CD8-positive, alpha-beta T cell (primary cell): ENCODE measurements at regions of chr1 and their contacts with region 1.

Region 1: DNA sequence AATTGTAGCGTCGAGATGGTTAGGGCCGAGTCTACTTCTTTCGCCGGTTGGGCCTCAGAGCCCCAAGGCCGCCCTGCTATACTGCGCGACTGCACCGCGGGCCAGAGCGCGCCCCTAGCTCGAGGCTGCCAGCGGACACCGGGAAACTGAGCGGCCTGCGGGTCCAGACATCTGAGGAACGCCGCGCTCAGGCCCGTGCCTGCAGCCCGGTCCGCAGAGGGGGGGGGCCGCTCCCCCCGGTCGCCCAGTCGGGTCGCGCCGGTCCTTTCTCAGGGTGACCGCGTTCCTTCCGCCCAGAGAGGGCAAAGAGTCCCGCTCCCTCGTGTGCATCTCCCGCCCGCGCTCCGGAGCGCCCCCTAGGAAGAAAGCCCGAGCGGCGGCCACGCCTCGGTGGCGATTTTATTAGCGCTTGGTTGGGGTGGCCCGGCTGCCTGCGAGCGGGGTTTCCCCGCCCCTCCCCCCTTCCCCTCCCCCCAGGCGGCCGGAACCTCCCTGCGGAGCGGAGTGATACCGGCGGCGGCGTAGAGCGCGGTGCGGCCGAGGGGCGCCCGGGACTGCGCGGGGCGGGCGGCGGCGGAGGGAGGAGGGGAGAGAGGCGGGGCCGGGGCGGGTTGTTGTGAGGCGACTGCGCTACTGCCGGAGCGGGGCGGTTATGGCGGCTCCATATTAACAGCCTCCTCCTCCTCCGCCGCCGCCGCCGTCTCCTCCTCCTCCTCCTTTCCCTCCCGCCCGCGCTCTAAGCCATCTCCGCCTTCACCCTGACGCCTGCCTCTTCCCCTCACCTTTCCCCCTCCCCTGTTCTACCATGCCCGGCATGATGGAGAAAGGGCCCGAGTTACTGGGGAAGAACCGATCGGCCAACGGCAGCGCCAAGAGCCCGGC is at the start of gene RCOR3:
- DNase-seq: peak; percentile 81 to 96 (median 91)
- ATAC-seq: peak; percentile 76
- H3K4me3 ChIP-seq: peak within 1 kb of the TSS; percentile 74 to 88
- H3K4me3 Mint-ChIP-seq: peak within 1 kb of the TSS; percentile 95
- H3K27ac ChIP-seq: peak within 1 kb of the TSS; percentile 80 to 84
- H3K27ac Mint-ChIP-seq: peak within 1 kb of the TSS; percentile 94
- H3K4me1 ChIP-seq: peaks cover 16% of the 10 kb centered on the region
- H3K4me1 Mint-ChIP-seq: peaks cover 18% of the 10 kb centered on the region
- H3K27me3 ChIP-seq: no peaks in the 10 kb centered on the region
- H3K27me3 Mint-ChIP-seq: no peaks in the 10 kb centered on the region
- CTCF ChIP-seq: peak; percentile 40
- total RNA-seq, gene RCOR3: 54.6 to 61.1 TPM

Region 2: DNA sequence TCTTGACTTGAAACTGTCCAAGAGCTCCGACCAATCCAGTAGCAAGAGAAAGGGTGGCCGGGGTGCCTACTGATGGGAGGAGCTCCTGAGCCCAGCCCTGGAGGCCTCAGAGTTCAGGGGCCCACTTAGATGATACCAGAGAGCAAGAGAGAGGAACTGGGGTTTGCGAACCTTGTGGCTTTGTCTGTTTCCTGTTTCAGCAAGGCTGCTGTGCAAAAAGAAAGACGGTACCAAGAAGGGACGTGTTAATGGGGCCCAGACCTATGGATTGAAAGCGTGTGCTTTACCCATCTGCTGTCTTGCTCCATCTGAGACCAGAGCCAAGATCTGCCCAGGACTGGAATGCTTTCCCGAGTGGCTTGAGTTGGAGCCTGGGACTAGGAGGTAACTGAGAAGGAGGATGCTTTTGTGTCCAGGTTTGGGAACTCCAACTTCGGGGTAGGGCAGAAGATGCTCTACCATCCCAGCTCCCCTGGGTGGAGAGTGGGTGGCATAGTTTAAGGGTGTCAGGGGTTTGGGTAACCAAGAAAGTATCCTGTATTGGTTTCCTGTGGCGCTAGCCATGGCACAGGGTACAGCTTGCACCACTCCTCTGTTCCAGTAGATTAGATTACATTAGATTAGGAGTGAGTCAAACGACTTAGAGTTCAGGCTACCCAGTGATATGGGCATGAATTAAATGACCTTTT is 1502.9 kb before region 1 on chr1 and contains the start of gene TRAF3IP3:
- CTCF ChIA-PET with region 1: no interaction called
- POLR2A ChIA-PET with region 1: no interaction called
- intact Hi-C with region 1: loop called in 1 of 2 experiments (anchors 10 kb)
- DNase-seq: peak; percentile 49 to 91 (median 79)
- ATAC-seq: peak; percentile 89
- H3K4me3 ChIP-seq: peak within 1 kb of the TSS; percentile 83 to 90
- H3K4me3 Mint-ChIP-seq: peak within 1 kb of the TSS; percentile 91
- H3K27ac ChIP-seq: peak within 1 kb of the TSS; percentile 79
- H3K27ac Mint-ChIP-seq: peak within 1 kb of the TSS; percentile 96
- H3K4me1 ChIP-seq: peaks cover 72% of the 10 kb centered on the region
- H3K4me1 Mint-ChIP-seq: peaks cover 81% of the 10 kb centered on the region
- H3K27me3 ChIP-seq: no peaks in the 10 kb centered on the region
- H3K27me3 Mint-ChIP-seq: no peaks in the 10 kb centered on the region
- CTCF ChIP-seq: no peak
- total RNA-seq, gene TRAF3IP3: 209 to 230 TPM

Region 3: DNA sequence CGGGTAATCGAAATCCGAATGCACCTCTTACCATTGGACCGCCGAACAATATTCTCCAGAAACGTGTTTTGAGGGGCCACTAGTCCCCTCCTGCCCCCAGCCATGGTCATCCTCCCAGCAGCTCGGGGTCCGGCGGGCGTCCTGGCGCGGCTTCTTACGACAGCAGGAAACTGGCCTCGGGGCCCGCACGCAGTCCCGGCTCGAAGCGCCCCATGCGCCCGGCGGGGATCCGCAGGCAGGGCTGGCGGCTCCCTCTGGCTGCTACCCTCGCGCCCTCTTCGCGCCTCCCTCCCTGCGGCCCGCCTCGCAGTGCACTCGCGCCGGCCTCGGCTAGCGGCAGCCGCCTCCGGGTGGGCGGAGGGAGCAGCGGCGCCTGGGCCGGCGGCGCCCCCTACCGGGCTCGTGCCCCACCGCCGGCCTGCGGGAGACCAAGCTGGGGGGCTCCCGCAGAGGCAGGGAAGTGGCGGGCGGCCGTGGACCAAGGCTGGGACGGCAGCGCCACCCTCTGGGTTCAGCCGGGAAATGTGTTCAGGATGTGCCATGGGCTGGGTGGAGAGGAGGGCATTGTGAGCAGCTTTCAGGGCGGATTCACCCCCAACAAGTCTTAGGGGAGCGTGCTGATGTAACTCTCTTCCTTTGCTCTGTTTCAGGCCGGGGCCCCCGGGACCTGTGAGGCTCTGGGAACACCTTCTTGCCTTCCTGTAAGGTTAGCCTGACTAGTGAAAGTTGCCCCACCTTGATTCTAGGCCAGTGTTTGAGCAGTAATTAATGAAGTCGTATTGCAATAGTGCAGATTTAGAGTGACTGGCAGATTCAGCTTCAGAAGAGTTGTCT is 124.9 kb before region 1 on chr1 and contains the start of gene KCNH1:
- CTCF ChIA-PET with region 1: interaction called, 8 read pairs
- POLR2A ChIA-PET with region 1: interaction called, 3 read pairs
- intact Hi-C with region 1: loop called (anchors 2 to 5 kb)
- DNase-seq: peak; percentile 67 to 89 (median 80)
- ATAC-seq: peak; percentile 95
- H3K4me3 ChIP-seq: peak within 1 kb of the TSS; percentile 38 to 40
- H3K4me3 Mint-ChIP-seq: peak within 1 kb of the TSS; percentile 77
- H3K27ac ChIP-seq: no peak within 1 kb of the TSS
- H3K27ac Mint-ChIP-seq: no peak within 1 kb of the TSS
- H3K4me1 ChIP-seq: peaks cover 13% of the 10 kb centered on the region
- H3K4me1 Mint-ChIP-seq: peaks cover 9% of the 10 kb centered on the region
- H3K27me3 ChIP-seq: peaks cover 0 to 7% of the 10 kb centered on the region in 2 experiments
- H3K27me3 Mint-ChIP-seq: peaks cover 37% of the 10 kb centered on the region
- CTCF ChIP-seq: peak; percentile 97
- total RNA-seq, gene KCNH1: not detected

Region 4: DNA sequence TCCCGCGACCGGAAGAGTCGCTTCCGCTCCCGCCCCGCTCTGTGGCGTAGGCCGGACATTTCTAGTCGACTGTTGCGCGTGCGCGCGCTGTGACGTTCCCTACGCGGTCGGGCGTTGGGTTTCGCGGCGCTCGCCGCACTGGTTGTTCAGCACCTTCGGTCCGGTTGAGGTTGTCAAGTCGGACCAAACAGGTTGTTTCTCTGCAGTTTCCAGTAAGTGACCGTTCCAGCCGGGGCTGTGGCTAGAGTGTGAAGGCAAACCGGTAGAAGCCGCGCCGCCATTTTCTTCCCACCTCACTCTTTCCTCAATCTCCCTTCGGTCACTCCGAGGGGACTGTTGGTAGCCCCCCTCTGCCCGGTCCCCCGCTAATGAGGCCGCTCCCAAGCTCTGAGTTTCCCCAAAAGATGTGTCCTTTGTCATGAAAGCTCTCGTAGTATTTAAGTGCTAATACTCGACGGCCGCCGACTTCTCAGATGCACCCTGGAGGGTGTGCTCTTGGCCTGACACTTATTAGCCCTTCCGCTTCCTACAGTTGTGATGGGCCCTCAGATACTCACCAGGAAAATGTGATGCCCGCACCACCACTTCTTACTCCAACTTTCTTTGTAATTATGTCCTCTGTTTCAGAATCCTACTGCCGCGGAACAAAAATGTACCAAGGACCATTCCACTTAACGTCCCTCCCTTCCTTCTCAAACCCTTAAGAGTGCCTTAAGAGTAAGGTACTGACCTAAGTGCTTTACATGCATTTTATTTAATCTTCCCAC is 123.9 kb after region 1 on chr1:
- CTCF ChIA-PET with region 1: no interaction called
- POLR2A ChIA-PET with region 1: interaction called, 3 read pairs
- intact Hi-C with region 1: loop called in 1 of 2 experiments (anchors 2 kb)
- DNase-seq: peak; percentile 45 to 87 (median 76)
- ATAC-seq: peak; percentile 89
- H3K4me3 ChIP-seq: peak overlapping the region; percentile 85 to 95
- H3K4me3 Mint-ChIP-seq: peak overlapping the region; percentile 85
- H3K27ac ChIP-seq: peak overlapping the region; percentile 93 to 95
- H3K27ac Mint-ChIP-seq: peak overlapping the region; percentile 98
- H3K4me1 ChIP-seq: peaks cover 8% of the 10 kb centered on the region
- H3K4me1 Mint-ChIP-seq: peaks cover 19% of the 10 kb centered on the region
- H3K27me3 ChIP-seq: no peaks in the 10 kb centered on the region
- H3K27me3 Mint-ChIP-seq: no peaks in the 10 kb centered on the region
- CTCF ChIP-seq: no peak

Region 5: DNA sequence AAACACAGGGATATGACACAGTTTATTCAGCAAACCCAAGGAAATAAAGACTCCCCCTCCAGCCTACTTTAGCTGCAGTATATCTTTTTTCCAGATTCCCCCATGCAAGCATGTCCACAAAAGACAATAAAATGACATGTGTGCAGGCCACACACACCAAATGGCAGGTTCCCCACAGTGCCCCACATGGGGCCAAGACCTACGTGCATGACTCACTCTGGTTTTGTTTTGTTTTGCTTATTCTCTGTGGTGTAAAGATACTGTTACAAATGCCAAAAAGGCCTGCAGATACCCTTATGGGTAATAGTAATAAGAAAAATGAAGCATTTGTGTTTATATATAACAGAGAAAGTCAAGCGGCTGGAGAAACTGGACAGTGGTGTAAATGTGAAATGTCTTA is 161.4 kb after region 1 on chr1:
- CTCF ChIA-PET with region 1: no interaction called
- POLR2A ChIA-PET with region 1: no interaction called
- intact Hi-C with region 1: no loop called
- DNase-seq: no peak
- ATAC-seq: no peak
- H3K4me3 ChIP-seq: no peak overlapping the region
- H3K4me3 Mint-ChIP-seq: no peak overlapping the region
- H3K27ac ChIP-seq: no peak overlapping the region
- H3K27ac Mint-ChIP-seq: no peak overlapping the region
- H3K4me1 ChIP-seq: peaks cover 8% of the 10 kb centered on the region
- H3K4me1 Mint-ChIP-seq: peaks cover 13% of the 10 kb centered on the region
- H3K27me3 ChIP-seq: no peaks in the 10 kb centered on the region
- H3K27me3 Mint-ChIP-seq: no peaks in the 10 kb centered on the region
- CTCF ChIP-seq: no peak

Region 6: GRCh38 chr1:213015099-213016050 is 1756.4 kb after region 1 on chr1 and contains the start of gene ANGEL2:
- CTCF ChIA-PET with region 1: no interaction called
- POLR2A ChIA-PET with region 1: no interaction called
- intact Hi-C with region 1: loop called in 1 of 2 experiments (anchors 2 kb)
- DNase-seq: peak; percentile 90 to 99 (median 95)
- ATAC-seq: peak; percentile 97
- H3K4me3 ChIP-seq: peak within 1 kb of the TSS; percentile 90 to 96
- H3K4me3 Mint-ChIP-seq: peak within 1 kb of the TSS; percentile 100
- H3K27ac ChIP-seq: peak within 1 kb of the TSS; percentile 90 to 92
- H3K27ac Mint-ChIP-seq: peak within 1 kb of the TSS; percentile 100
- H3K4me1 ChIP-seq: peaks cover 19% of the 10 kb centered on the region
- H3K4me1 Mint-ChIP-seq: peaks cover 40% of the 10 kb centered on the region
- H3K27me3 ChIP-seq: no peaks in the 10 kb centered on the region
- H3K27me3 Mint-ChIP-seq: no peaks in the 10 kb centered on the region
- CTCF ChIP-seq: no peak
- total RNA-seq, gene ANGEL2: 47.4 to 52.5 TPM